Activated CD8-positive, alpha-beta T cell treated with anti-CD3 and anti-CD28 coated beads for 36 hours (primary cell): ENCODE measurements at regions of chr1 and their contacts with region 1.

Region 1: GRCh38 chr1:9004700-9005394 is 21.4 kb downstream of the SLC2A7 start:
- DNase-seq: peak; percentile 94
- ATAC-seq: peak; percentile 97
- H3K4me3 Mint-ChIP-seq: peak overlapping the region; percentile 62
- H3K27ac Mint-ChIP-seq: peak overlapping the region; percentile 42
- H3K4me1 Mint-ChIP-seq: peaks cover 11% of the 10 kb centered on the region
- H3K27me3 Mint-ChIP-seq: no peaks in the 10 kb centered on the region
- CTCF ChIP-seq: peak; percentile 97

Region 2: GRCh38 chr1:8858888-8859706 is 145.8 kb before region 1 on chr1:
- CTCF ChIA-PET with region 1: interaction called, 84 read pairs
- POLR2A ChIA-PET with region 1: interaction called, 6 read pairs
- intact Hi-C with region 1: no loop called
- DNase-seq: peak; percentile 74
- ATAC-seq: peak; percentile 54
- H3K4me3 Mint-ChIP-seq: no peak overlapping the region
- H3K27ac Mint-ChIP-seq: peak overlapping the region; percentile 75
- H3K4me1 Mint-ChIP-seq: peaks cover 34% of the 10 kb centered on the region
- H3K27me3 Mint-ChIP-seq: no peaks in the 10 kb centered on the region
- CTCF ChIP-seq: peak; percentile 68

Region 3: DNA sequence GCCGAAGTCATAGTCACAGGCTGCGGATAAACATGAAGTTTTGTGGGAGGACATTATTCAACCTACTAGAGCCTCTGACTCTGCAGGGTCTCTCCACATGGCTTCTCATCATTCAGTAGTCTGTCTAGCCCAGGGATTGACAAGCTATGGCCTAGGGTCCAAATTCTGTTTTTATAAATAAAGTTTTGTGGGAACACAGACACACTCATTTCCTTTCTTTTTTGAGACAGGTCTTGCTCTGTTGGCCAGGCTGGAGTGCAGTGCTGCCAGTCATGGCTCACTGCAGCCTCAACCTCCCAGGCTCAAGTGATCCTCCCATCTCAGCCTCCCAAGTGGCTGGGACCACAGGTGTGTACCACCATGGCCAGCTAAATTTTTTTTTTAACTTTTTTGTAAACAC is 118.3 kb before region 1 on chr1:
- CTCF ChIA-PET with region 1: interaction called, 21 read pairs
- POLR2A ChIA-PET with region 1: no interaction called
- intact Hi-C with region 1: no loop called
- DNase-seq: no peak
- ATAC-seq: no peak
- H3K4me3 Mint-ChIP-seq: no peak overlapping the region
- H3K27ac Mint-ChIP-seq: no peak overlapping the region
- H3K4me1 Mint-ChIP-seq: no peaks in the 10 kb centered on the region
- H3K27me3 Mint-ChIP-seq: no peaks in the 10 kb centered on the region
- CTCF ChIP-seq: no peak

Region 4: GRCh38 chr1:8925406-8925805 is 79.4 kb before region 1 on chr1:
- CTCF ChIA-PET with region 1: interaction called, 117 read pairs
- POLR2A ChIA-PET with region 1: interaction called, 25 read pairs
- intact Hi-C with region 1: no loop called
- DNase-seq: no peak
- ATAC-seq: no peak
- H3K4me3 Mint-ChIP-seq: no peak overlapping the region
- H3K27ac Mint-ChIP-seq: no peak overlapping the region
- H3K4me1 Mint-ChIP-seq: peaks cover 28% of the 10 kb centered on the region
- H3K27me3 Mint-ChIP-seq: no peaks in the 10 kb centered on the region
- CTCF ChIP-seq: no peak

Region 5: DNA sequence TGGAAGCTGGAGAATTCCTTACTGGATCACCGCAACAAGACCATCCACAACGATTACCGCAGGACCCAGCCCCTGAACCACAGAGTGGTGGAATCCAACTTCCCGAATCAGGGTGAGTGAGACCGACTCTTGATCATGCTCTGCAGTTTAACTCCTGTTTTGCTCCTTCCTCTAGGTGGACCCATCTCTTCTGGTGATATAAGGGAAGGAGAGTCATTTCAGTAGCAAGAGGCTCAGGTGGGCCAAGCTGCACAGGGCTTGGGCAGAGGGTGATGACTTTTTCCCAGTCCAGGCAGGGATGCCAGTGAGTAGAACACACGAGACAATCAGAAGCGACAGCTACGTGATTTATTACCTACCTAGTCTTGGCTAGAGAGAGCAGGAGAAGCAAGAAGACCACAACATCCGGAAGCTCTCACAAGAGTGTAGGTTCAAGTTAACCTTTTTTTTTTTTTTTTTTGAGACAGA is 33.9 kb before region 1 on chr1:
- CTCF ChIA-PET with region 1: interaction called, 22 read pairs
- POLR2A ChIA-PET with region 1: interaction called, 8 read pairs
- intact Hi-C with region 1: no loop called
- DNase-seq: peak; percentile 85
- ATAC-seq: peak; percentile 83
- H3K4me3 Mint-ChIP-seq: peak overlapping the region; percentile 93
- H3K27ac Mint-ChIP-seq: peak overlapping the region; percentile 100
- H3K4me1 Mint-ChIP-seq: peaks cover 40% of the 10 kb centered on the region
- H3K27me3 Mint-ChIP-seq: no peaks in the 10 kb centered on the region
- CTCF ChIP-seq: no peak

Region 6: GRCh38 chr1:9110669-9111356 is 106.0 kb after region 1 on chr1:
- CTCF ChIA-PET with region 1: interaction called, 12 read pairs
- POLR2A ChIA-PET with region 1: no interaction called
- intact Hi-C with region 1: loop called (anchors 10 kb)
- DNase-seq: peak; percentile 93
- ATAC-seq: peak; percentile 83
- H3K4me3 Mint-ChIP-seq: no peak overlapping the region
- H3K27ac Mint-ChIP-seq: no peak overlapping the region
- H3K4me1 Mint-ChIP-seq: peaks cover 2% of the 10 kb centered on the region
- H3K27me3 Mint-ChIP-seq: no peaks in the 10 kb centered on the region
- CTCF ChIP-seq: peak; percentile 88

Region 7: DNA sequence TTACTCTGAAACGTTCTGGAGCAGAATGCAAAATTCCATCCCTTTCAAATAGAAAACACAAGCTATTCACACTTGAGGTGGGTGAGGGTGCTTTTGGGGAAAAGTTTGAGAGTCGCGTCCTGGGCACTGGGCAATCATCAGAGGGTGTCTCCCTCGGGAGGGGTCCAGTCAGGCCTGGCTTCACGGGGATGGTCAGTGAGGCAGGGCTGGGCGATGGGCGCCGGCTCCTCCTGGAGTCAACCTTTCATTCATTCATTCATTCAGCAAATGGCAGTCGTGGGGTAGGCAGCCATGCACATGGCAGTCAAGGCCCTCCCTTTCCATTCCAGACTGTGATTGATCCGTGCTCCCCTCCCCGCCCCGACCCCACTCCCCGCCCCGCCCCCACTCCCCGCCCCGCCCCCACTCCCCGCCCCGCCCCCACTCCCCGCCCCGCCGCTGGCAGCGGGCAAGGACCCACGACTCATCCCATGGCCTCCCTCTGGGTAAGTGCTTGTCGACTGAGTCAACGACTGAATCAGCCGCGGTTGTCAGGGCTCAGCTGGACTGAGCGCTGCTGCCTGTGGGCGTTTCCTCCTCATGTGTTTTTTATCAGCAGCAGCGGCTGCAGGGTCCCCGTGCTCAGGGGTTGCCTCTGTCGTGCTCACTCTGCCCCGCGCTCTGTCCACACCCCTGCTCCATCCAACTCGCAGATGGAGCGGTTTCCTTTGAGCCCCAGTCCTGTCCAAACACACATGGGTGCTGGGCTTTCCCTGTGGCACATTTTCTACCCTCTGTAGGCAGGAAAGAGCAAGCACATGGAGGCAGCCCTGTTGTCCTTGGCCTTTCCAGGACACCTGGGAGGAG is 275.4 kb after region 1 on chr1:
- CTCF ChIA-PET with region 1: no interaction called
- POLR2A ChIA-PET with region 1: no interaction called
- intact Hi-C with region 1: no loop called
- DNase-seq: peak; percentile 85
- ATAC-seq: peak; percentile 84
- H3K4me3 Mint-ChIP-seq: no peak overlapping the region
- H3K27ac Mint-ChIP-seq: peak overlapping the region; percentile 42
- H3K4me1 Mint-ChIP-seq: peaks cover 54% of the 10 kb centered on the region
- H3K27me3 Mint-ChIP-seq: no peaks in the 10 kb centered on the region
- CTCF ChIP-seq: no peak